ENCODE measurements at regions of chr9 and their contacts with region 1.

Region 1: DNA sequence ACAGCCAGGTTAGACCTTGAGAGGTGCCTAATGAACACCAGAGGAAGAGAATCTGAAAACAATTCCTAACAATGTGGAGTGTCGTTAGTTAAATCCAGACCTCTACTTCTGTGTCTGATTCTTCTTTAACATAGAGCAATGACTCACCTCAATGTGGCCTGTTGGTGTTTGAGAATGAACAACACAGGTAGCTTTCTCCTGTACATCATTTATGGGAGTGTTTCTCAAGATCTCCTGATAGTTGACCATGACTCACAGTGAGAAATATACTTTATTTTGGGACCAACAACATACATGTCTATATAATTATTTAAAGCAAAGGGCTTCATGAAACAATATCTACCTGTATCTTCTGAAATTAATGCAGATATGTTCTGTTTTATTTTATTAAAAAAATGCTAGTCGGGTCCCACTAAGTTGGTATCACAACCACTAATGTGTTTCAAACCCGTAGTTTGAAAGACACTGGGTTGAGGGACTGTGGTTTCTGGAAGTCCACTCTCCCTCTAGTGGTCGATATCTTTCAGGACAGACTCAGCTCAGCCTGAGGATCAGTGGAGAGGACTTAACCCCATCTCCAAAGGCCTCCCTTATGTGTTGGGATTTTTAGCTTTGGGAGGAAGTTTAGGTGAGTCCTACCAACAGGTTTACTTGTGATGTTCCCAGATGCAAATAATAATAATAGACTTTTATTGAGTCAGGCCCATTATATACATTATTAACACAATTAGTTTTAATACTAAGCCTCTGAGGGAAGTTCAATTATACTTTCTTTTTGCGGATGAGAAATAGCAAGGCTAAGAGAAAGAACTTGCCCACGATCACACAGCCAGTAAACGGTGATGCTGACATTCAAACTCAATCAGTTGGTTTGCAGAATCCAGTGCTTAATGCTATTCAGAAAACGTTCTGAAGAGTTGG is 70.0 kb upstream of the KLF9 start:
- DNase-seq: peak; percentile 81
- H3K4me3 ChIP-seq: no peak overlapping the region
- H3K27ac ChIP-seq: no peak overlapping the region
- H3K4me1 ChIP-seq: peaks cover 23% of the 10 kb centered on the region
- H3K27me3 ChIP-seq: no peaks in the 10 kb centered on the region
- CTCF ChIP-seq: peak; percentile 68 to 89
- POLR2A ChIP-seq: no peak

Region 2: DNA sequence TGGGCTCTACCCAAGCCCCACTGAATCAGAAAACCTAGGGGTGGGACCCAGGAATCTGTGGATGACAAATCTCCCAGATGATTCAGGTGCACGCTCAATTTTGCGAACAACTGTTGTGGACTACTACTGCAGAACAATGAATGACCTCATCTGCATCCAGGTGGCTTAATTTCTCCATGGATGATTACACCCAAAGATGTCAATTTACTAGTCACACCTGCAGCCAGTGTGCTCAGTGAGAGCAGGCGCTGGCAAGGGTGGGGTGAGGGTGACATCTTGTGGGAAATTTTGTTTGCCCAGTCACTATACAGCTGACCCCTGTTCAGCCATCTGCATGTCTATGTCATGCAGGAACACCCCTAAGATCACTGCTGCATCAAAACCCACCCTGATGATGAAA is 1041.3 kb before region 1 on chr9:
- CTCF ChIA-PET with region 1: no interaction called
- POLR2A ChIA-PET with region 1: no interaction called
- dilution Hi-C with region 1: no loop called
- intact Hi-C with region 1: no loop called
- DNase-seq: no peak
- H3K4me3 ChIP-seq: no peak overlapping the region
- H3K27ac ChIP-seq: no peak overlapping the region
- H3K4me1 ChIP-seq: no peaks in the 10 kb centered on the region
- H3K27me3 ChIP-seq: no peaks in the 10 kb centered on the region
- CTCF ChIP-seq: no peak
- POLR2A ChIP-seq: no peak

Region 3: GRCh38 chr9:69971643-69972449 is 512.6 kb before region 1 on chr9:
- CTCF ChIA-PET with region 1: no interaction called
- POLR2A ChIA-PET with region 1: no interaction called
- dilution Hi-C with region 1: no loop called
- intact Hi-C with region 1: loop called (anchors 10 kb)
- DNase-seq: peak; percentile 66
- H3K4me3 ChIP-seq: no peak overlapping the region
- H3K27ac ChIP-seq: no peak overlapping the region
- H3K4me1 ChIP-seq: peaks cover 19% of the 10 kb centered on the region
- H3K27me3 ChIP-seq: no peaks in the 10 kb centered on the region
- CTCF ChIP-seq: peak; percentile 86 to 87
- POLR2A ChIP-seq: no peak

Region 4: DNA sequence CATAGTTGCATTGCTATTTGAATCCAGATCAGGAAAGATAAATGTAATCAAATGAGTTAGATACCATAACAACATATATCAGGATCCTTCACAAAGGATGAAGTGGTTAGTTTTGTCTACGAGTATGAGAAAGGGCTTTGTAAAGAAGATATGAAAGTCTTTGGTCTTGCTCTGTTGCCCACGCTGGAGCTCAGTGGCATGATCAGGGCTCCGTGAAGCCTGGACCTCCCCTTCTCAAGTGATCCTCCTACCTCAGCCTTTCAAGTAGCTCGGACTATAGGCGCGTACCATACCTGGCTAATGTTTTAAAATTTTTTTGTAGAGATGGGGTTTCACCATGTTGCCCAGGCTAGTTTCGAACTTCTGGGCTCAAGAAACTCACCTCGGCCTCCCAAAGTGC is 223.9 kb before region 1 on chr9:
- CTCF ChIA-PET with region 1: no interaction called
- POLR2A ChIA-PET with region 1: no interaction called
- dilution Hi-C with region 1: no loop called
- intact Hi-C with region 1: no loop called
- DNase-seq: no peak
- H3K4me3 ChIP-seq: peak overlapping the region in 1 of 3 experiments; percentile 95
- H3K27ac ChIP-seq: no peak overlapping the region
- H3K4me1 ChIP-seq: peaks cover 37% of the 10 kb centered on the region
- H3K27me3 ChIP-seq: no peaks in the 10 kb centered on the region
- CTCF ChIP-seq: no peak
- POLR2A ChIP-seq: no peak

Region 5: DNA sequence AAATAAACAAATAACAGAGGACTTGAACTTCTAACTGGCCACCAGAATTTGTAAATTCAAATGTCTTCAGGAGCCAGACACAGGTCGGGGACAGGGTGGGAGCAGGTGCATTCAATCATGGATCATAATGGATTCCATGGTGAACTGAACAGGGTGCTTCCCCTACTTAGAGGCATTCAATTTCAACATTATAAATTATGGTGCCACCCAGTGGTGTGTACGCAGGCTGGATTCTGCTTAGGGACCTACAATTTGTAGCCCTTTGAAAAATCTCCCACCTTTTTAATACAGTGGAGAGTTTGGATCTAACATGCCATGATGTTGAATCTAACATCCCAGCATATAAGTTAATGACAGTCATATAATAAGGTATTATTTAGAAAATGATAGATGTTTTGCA is 92.3 kb before region 1 on chr9:
- CTCF ChIA-PET with region 1: interaction called, 26 read pairs
- POLR2A ChIA-PET with region 1: no interaction called
- dilution Hi-C with region 1: no loop called
- intact Hi-C with region 1: no loop called
- DNase-seq: peak; percentile 12
- H3K4me3 ChIP-seq: no peak overlapping the region
- H3K27ac ChIP-seq: no peak overlapping the region
- H3K4me1 ChIP-seq: peaks cover 32% of the 10 kb centered on the region
- H3K27me3 ChIP-seq: no peaks in the 10 kb centered on the region
- CTCF ChIP-seq: peak in 1 of 2 donors; percentile 15
- POLR2A ChIP-seq: no peak

Region 6: DNA sequence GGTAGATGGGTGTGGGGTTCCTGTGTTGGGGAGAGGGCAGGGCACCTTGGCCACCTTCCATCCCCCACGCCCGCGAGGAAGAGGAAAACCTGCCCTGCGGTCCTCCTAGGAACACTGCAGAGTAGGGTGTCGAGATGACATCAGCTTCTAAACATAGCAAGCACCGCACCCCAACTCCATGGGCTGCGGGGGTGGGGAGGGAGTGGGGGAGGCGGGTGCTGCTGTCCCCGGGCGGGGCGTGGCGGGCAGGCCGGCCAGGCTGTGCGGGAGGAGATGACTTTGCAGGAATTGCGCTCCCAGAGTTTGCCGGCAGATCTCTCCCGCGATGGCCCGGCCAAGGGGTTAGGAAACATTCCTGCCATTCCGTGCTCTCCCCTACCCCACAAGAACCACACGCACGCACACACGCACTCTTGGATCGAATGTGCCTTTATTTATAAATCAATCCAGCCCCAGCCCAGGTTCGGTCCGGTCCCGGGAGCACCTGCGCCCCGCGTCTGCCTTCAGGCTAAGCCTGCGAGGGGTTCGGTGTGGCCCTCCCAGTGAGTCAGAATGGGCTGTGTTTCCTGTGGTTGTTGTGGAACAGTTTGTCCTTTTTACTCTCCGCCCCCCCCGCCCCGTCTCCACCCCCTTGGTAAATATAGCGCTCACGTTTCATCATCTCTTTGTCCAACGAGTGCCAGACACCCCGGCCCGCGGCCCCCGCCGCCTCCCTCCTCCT is 64.8 kb before region 1 on chr9:
- CTCF ChIA-PET with region 1: interaction called, 76 read pairs
- POLR2A ChIA-PET with region 1: interaction called, 8 read pairs
- dilution Hi-C with region 1: no loop called
- intact Hi-C with region 1: loop called (anchors 1 kb)
- DNase-seq: peak; percentile 98
- H3K4me3 ChIP-seq: peak overlapping the region in 2 of 3 experiments; percentile 43 to 50
- H3K27ac ChIP-seq: peak overlapping the region; percentile 96
- H3K4me1 ChIP-seq: peaks cover 29% of the 10 kb centered on the region
- H3K27me3 ChIP-seq: no peaks in the 10 kb centered on the region
- CTCF ChIP-seq: peak in 1 of 2 donors; percentile 9
- POLR2A ChIP-seq: peak; percentile 92

Region 7: GRCh38 chr9:70466976-70467561 is 17.4 kb before region 1 on chr9:
- CTCF ChIA-PET with region 1: interaction called, 11 read pairs
- POLR2A ChIA-PET with region 1: no interaction called
- dilution Hi-C with region 1: no loop called
- intact Hi-C with region 1: no loop called
- DNase-seq: peak; percentile 38
- H3K4me3 ChIP-seq: no peak overlapping the region
- H3K27ac ChIP-seq: no peak overlapping the region
- H3K4me1 ChIP-seq: peaks cover 18% of the 10 kb centered on the region
- H3K27me3 ChIP-seq: no peaks in the 10 kb centered on the region
- CTCF ChIP-seq: no peak
- POLR2A ChIP-seq: no peak

Measured in endothelial cell of umbilical vein (primary cell).